ENCODE measurements at regions of chr6 and their contacts with region 1.

Region 1: DNA sequence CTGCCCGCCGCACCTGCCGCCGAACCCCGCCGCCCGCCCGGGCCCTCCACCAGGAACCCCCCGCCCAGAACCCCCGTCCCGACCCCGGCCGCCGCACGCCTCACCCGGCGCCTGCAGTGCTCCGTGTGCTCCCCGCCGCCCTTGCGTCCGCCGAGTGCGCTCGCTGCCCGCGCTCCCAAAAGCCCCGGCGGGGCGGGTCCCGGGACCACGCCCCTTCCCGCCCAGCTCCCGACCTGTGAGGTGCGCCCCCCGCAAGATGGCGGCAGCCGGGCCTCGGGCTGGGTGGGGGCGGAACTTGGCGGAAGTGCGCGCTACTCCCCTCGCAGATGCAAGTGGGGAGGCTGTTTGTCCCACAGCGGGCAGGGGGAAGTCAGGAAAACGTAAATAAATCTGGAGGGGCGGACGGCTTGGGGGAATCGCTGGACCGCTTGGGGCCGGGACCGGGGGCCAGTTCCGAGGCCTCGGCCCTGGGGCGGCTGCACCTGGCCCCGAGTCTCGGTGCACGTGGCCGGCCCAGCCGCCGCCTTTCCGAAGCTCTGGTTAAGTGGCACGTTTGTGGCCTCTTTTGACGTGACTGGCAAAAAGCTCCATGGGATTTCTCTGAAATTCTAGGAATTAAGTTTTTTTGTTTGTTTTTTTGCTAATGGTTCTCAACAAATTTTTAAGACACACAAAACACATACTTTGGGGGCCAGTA is at the start of gene EZR:
- DNase-seq: peak; percentile 58
- H3K4me3 ChIP-seq: peak within 1 kb of the TSS; percentile 84 to 98 (median 87)
- H3K27ac ChIP-seq: peak within 1 kb of the TSS; percentile 48
- H3K4me1 ChIP-seq: peaks cover 16% of the 10 kb centered on the region
- H3K27me3 ChIP-seq: no peaks in the 10 kb centered on the region
- CTCF ChIP-seq: no peak
- POLR2A ChIP-seq: no peak
- total RNA-seq, gene EZR: 105 and 108 TPM in 2 replicates

Region 2: DNA sequence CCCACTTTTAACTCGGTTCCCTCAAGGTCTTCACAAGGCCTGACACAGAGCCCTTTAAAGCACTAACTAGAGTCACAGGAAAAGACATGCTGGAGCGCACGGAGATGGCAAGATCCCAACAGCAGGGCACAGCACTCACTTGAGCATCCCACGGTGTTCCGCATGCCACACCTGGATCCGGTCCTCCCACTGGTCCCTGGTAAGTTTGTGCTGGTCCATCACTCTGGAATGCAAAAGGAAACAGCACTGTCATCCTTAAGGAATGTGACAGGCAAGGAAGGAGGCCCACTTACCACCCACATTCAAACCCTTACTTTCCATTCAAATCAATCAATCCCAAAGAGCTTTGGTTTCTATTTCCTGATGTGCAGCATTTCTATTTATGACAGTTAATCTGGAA is 34.9 kb before region 1 on chr6:
- CTCF ChIA-PET with region 1: interaction called, 3 read pairs
- POLR2A ChIA-PET with region 1: no interaction called
- dilution Hi-C with region 1: no loop called
- intact Hi-C with region 1: loop called (anchors 1 kb)
- DNase-seq: peak; percentile 8
- H3K4me3 ChIP-seq: no peak overlapping the region
- H3K27ac ChIP-seq: peak overlapping the region; percentile 47
- H3K4me1 ChIP-seq: peaks cover 12% of the 10 kb centered on the region
- H3K27me3 ChIP-seq: no peaks in the 10 kb centered on the region
- CTCF ChIP-seq: no peak
- POLR2A ChIP-seq: no peak

Region 3: GRCh38 chr6:158799051-158799792 is 20.1 kb before region 1 on chr6:
- CTCF ChIA-PET with region 1: interaction called, 5 read pairs
- POLR2A ChIA-PET with region 1: interaction called, 4 read pairs
- dilution Hi-C with region 1: no loop called
- intact Hi-C with region 1: loop called (anchors 2 kb)
- DNase-seq: peak; percentile 85
- H3K4me3 ChIP-seq: no peak overlapping the region
- H3K27ac ChIP-seq: no peak overlapping the region
- H3K4me1 ChIP-seq: peaks cover 28% of the 10 kb centered on the region
- H3K27me3 ChIP-seq: no peaks in the 10 kb centered on the region
- CTCF ChIP-seq: peak; percentile 17 to 28
- POLR2A ChIP-seq: no peak

Region 4: DNA sequence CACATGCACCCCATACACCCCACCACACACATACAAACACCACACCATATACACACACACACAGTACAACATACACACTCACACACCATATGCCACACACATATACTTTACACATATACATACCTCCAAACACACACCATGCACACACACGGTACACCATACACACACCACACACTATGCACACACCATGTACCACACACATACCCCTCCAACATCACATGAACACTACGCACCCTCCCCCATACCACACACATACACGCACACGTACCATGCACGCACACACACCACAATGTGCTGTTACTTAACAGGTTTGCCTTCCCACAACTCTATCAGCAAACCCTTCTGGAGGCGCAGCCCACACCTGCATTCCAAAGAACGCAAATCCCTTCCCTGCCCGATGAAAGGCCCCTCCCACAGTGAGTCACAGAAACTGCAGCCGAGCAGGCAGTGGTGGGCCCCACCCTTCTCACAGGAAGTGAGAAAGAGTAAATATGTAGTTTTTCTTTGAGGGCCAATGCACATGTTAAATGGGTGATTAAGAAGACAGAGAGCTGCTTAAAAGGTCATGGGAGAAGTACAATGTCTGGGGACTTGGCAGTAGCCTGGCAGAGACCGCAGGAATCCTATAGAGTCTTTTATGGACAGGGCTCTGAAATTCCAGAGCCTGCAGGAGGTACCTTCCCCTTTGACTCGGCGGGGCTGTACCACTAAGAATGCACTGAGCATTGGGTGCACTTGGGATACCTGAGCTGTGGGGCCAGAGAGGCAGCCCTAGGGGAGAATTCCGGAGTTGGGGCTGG is 33.9 kb after region 1 on chr6:
- CTCF ChIA-PET with region 1: interaction called, 3 read pairs
- POLR2A ChIA-PET with region 1: no interaction called
- dilution Hi-C with region 1: no loop called
- intact Hi-C with region 1: loop called (anchors 2 kb)
- DNase-seq: peak; percentile 66
- H3K4me3 ChIP-seq: no peak overlapping the region
- H3K27ac ChIP-seq: peak overlapping the region; percentile 14
- H3K4me1 ChIP-seq: peaks cover 24% of the 10 kb centered on the region
- H3K27me3 ChIP-seq: no peaks in the 10 kb centered on the region
- CTCF ChIP-seq: no peak
- POLR2A ChIP-seq: no peak

Region 5: GRCh38 chr6:158869826-158870648 is 50.7 kb after region 1 on chr6:
- CTCF ChIA-PET with region 1: interaction called, 4 read pairs
- POLR2A ChIA-PET with region 1: no interaction called
- dilution Hi-C with region 1: no loop called
- intact Hi-C with region 1: loop called (anchors 1 kb)
- DNase-seq: peak; percentile 83
- H3K4me3 ChIP-seq: peak overlapping the region in 2 of 3 experiments; percentile 29 to 65
- H3K27ac ChIP-seq: peak overlapping the region; percentile 9
- H3K4me1 ChIP-seq: peaks cover 7% of the 10 kb centered on the region
- H3K27me3 ChIP-seq: peaks cover 6 to 18% of the 10 kb centered on the region in 2 experiments
- CTCF ChIP-seq: no peak
- POLR2A ChIP-seq: no peak

Measured in endothelial cell of umbilical vein (primary cell).